Activated CD8-positive, alpha-beta T cell treated with anti-CD3 and anti-CD28 coated beads for 36 hours (primary cell): ENCODE measurements at regions of chr1 and their contacts with region 1.

Region 1: DNA sequence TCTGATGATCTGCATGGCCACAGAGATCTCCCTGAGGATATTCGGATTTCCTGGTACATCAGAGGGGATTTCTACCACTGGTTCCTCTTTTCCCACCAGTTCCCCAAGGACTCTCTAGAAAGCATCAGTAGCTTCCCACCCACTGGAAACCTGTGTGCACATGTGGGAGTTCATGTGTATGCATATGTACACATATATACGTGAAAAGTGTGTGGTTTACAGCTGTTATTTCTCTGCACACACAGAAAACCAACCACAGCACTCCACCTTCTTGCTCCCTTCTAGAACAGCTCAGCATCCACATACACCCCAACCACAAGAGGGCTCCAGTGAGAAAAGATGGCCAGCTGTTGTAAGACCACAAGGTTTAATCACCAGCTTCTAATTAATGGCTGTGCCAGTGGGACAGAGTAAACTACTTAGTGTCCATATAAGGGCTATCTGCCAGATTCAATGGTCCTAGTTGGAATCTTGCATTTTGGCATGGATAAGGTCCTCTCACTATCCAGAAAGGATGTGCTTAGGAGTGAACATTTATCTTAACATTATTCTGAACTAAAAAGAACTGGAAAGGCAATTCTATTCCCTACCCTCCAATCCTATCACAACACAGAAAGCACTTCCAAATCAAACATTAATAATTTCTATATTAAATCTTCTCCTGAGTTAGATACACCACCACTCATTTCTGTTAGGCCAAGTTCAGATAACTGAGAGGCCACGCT is 24.1 kb downstream of the GPR3 start:
- DNase-seq: peak; percentile 71
- ATAC-seq: peak; percentile 49
- H3K4me3 Mint-ChIP-seq: no peak overlapping the region
- H3K27ac Mint-ChIP-seq: peak overlapping the region; percentile 7
- H3K4me1 Mint-ChIP-seq: peaks cover 34% of the 10 kb centered on the region
- H3K27me3 Mint-ChIP-seq: no peaks in the 10 kb centered on the region
- CTCF ChIP-seq: peak; percentile 64

Region 2: DNA sequence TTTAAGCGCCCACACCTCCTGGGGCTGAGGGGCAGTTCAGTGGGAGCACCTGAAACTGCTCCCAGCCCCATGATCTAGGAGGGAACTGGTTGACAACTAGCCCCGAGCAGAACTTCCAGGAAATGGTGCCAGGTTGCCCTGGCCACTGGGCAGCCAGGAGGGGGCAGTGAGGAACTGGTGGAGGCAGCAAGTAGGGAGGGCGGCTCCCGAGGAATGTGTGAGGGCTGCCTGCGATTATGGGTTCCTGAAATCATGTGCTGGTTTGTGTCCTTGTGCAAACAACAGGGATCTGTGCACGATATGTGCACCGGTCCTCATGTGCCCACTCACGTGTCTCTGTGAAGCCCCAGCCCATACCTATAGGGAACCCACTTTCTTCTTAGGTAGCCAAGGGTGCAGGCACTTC is 14.2 kb before region 1 on chr1:
- CTCF ChIA-PET with region 1: interaction called, 34 read pairs
- POLR2A ChIA-PET with region 1: interaction called, 4 read pairs
- intact Hi-C with region 1: no loop called
- DNase-seq: no peak
- ATAC-seq: no peak
- H3K4me3 Mint-ChIP-seq: no peak overlapping the region
- H3K27ac Mint-ChIP-seq: peak overlapping the region; percentile 83
- H3K4me1 Mint-ChIP-seq: peaks cover 24% of the 10 kb centered on the region
- H3K27me3 Mint-ChIP-seq: no peaks in the 10 kb centered on the region
- CTCF ChIP-seq: no peak

Region 3: DNA sequence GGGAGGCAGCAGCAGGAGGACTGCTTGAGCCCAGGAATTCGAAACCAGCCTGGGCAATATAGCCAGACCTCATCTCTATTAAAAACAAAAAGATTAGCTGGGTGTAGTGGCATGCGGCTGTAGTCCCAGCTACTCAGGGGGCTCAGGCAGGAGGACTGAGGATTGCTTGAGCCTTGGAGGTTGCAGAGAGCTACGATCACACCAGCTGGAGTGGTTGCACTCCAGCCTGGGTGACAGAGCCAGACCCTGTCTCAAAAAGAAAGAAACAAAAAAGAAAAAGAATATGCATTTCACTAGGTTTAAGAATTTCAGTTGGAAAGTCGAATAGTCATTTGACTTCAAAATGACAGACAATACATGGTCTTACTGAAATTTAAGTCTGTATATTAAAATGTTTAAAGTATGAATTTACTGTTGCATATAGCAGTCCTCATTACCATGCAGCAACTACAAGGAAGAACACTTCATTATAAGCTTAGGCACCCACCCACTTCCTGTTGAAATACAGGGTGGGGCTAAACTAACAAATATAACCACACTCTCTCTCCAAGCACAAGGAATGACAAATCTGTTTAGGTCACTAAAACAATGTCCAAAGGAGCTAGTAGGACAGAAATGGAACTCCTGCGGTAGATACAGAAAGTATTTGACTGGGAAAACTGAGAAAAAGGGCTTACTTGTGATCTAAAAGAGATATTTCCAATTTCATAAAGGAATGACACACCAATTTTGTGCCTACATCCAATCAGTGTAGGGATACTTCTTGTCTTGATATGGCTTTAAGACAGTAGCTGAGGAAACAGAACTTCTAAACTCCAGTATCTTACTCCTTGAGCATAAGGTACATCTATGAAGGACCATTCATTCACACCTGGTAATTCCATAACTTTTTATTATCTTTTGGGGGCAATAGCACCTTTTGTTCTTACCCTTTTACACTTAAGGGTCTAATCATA is 19.9 kb after region 1 on chr1:
- CTCF ChIA-PET with region 1: interaction called, 12 read pairs
- POLR2A ChIA-PET with region 1: interaction called, 4 read pairs
- intact Hi-C with region 1: no loop called
- DNase-seq: no peak
- ATAC-seq: peak; percentile 77
- H3K4me3 Mint-ChIP-seq: no peak overlapping the region
- H3K27ac Mint-ChIP-seq: peak overlapping the region; percentile 71
- H3K4me1 Mint-ChIP-seq: peaks cover 71% of the 10 kb centered on the region
- H3K27me3 Mint-ChIP-seq: no peaks in the 10 kb centered on the region
- CTCF ChIP-seq: no peak

Region 4: DNA sequence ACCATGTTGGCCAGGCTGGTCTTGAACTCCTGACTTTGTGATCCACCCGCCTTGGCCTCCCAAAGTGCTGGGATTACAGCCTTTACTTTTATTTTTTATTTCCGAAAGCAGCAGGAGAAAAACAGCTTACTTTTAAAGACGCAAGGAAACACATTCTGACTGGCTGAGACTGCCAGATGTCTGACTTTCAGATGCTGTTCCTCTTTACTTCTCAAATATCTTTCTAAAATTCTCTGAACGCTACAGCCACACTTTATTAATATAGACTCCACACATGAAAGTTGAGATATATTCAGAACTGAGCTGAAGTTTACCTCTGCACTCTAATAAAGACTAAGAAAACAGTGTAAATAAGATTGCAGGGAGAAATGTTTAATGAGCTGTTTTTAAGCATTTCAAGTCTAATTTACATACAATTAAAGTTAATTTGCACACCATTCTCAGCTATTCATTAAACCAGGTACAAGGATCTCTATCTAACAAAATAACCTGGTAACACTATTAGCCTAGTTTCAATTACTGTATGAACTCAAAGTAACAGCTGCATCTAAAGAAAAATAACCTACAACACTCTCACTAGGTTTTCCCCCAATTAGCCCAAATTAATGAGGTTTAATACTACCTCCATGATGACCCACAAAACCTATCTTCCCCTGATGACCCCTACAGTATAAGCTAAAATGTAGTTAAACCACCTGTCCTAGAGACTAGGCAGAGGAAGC is 48.5 kb after region 1 on chr1:
- CTCF ChIA-PET with region 1: interaction called, 11 read pairs
- POLR2A ChIA-PET with region 1: interaction called, 4 read pairs
- intact Hi-C with region 1: no loop called
- DNase-seq: no peak
- ATAC-seq: no peak
- H3K4me3 Mint-ChIP-seq: no peak overlapping the region
- H3K27ac Mint-ChIP-seq: peak overlapping the region; percentile 50
- H3K4me1 Mint-ChIP-seq: peaks cover 47% of the 10 kb centered on the region
- H3K27me3 Mint-ChIP-seq: no peaks in the 10 kb centered on the region
- CTCF ChIP-seq: no peak

Region 5: GRCh38 chr1:27481994-27482620 is 65.6 kb after region 1 on chr1:
- CTCF ChIA-PET with region 1: interaction called, 9 read pairs
- POLR2A ChIA-PET with region 1: interaction called, 3 read pairs
- intact Hi-C with region 1: loop called (anchors 5 kb)
- DNase-seq: no peak
- ATAC-seq: peak; percentile 74
- H3K4me3 Mint-ChIP-seq: no peak overlapping the region
- H3K27ac Mint-ChIP-seq: peak overlapping the region; percentile 56
- H3K4me1 Mint-ChIP-seq: peaks cover 40% of the 10 kb centered on the region
- H3K27me3 Mint-ChIP-seq: no peaks in the 10 kb centered on the region
- CTCF ChIP-seq: no peak

Region 6: DNA sequence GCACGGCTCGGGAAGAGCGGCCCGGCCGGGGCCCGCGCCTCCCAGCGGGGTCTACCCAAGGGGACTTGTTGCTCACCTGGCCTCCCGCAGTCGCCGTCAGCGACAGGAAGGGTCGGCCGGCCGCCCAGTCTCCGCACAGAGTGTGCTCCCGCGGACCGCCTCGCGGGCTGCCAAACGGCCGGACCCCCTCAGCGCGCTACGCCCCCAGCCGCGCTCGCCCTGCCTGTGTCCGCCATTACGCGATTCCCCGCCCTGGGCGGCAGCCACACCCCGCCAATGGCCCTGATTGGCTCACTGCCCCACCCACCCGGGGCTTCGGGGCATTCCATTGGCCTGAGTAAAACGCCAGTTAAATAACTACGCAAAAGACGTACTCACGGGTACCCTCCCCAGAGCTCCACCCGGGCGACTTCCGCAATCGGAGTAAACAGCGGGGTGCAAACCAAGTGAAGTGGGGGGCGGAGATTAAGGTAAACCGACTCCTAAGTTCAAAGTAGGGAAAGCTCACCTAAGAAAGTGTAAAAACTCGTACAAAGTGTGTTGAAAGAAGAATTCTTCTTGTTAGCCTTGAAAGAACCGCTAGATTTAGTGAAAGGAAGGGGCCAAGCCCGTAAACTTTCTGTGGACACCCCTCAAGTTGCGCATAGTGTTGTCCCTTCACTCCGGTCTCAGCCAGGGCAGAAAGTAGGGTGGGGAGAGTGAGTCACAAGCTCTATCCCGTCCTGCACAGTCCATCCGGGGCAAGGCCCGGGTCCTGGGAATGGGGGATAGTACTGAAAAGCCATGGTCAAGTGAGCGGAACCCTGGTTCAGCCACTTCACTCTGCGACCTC is 73.6 kb after region 1 on chr1 and contains the start of gene WASF2:
- CTCF ChIA-PET with region 1: interaction called, 16 read pairs
- POLR2A ChIA-PET with region 1: no interaction called
- intact Hi-C with region 1: no loop called
- DNase-seq: peak; percentile 98
- ATAC-seq: peak; percentile 96
- H3K4me3 Mint-ChIP-seq: peak within 1 kb of the TSS; percentile 99
- H3K27ac Mint-ChIP-seq: peak within 1 kb of the TSS; percentile 100
- H3K4me1 Mint-ChIP-seq: peaks cover 28% of the 10 kb centered on the region
- H3K27me3 Mint-ChIP-seq: no peaks in the 10 kb centered on the region
- CTCF ChIP-seq: no peak
- total RNA-seq, gene WASF2: 108 to 111 TPM